ENCODE measurements at regions of chr7 and their contacts with region 1.

Region 1: DNA sequence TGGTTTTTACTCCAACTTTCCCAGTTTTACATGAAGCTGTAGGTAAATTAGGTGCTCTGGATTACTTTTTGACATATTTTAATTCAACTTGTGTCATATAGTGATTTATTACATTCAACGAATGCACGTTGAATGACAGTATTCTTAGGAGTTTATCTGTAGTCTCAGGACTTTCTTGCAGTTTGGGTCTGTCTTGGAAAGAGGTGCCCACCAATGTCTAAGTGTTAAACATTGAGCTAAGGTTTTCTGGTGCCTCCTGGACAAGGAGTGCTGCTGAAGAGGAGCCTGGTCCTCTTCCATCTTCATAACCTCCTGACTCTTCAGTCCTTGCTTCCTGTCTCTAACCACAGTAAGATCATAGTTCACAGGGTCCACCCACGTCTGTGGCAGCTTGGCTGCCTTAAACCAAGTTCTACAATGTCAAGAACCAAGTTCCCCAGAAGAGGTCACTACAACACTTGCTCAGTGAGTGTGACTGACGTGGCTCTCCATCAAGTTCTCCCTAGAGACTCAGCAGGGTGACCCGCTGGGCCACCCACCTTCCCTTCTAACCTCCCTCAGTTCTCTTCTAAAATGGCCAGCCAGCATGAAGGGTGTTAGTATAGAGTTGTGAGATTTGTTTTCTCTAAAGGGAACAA is 6.1 kb downstream of the NPY start:
- DNase-seq: no peak
- ATAC-seq: peak; percentile 64 to 80 (median 78)
- H3K4me3 ChIP-seq: no peak overlapping the region
- H3K27ac ChIP-seq: no peak overlapping the region
- H3K4me1 ChIP-seq: no peaks in the 10 kb centered on the region
- H3K27me3 ChIP-seq: peaks cover 0 to 12% (median 0%) of the 10 kb centered on the region in 3 donors
- CTCF ChIP-seq: peak; percentile 60

Region 2: GRCh38 chr7:24665564-24666294 is 375.6 kb after region 1 on chr7:
- intact Hi-C with region 1: loop called (anchors 5 to 10 kb)
- DNase-seq: no peak
- ATAC-seq: peak in 3 of 4 donors; percentile 68 to 79 (median 68)
- H3K4me3 ChIP-seq: no peak overlapping the region
- H3K27ac ChIP-seq: no peak overlapping the region
- H3K4me1 ChIP-seq: no peaks in the 10 kb centered on the region
- H3K27me3 ChIP-seq: no peaks in the 10 kb centered on the region
- CTCF ChIP-seq: peak; percentile 70

Region 3: DNA sequence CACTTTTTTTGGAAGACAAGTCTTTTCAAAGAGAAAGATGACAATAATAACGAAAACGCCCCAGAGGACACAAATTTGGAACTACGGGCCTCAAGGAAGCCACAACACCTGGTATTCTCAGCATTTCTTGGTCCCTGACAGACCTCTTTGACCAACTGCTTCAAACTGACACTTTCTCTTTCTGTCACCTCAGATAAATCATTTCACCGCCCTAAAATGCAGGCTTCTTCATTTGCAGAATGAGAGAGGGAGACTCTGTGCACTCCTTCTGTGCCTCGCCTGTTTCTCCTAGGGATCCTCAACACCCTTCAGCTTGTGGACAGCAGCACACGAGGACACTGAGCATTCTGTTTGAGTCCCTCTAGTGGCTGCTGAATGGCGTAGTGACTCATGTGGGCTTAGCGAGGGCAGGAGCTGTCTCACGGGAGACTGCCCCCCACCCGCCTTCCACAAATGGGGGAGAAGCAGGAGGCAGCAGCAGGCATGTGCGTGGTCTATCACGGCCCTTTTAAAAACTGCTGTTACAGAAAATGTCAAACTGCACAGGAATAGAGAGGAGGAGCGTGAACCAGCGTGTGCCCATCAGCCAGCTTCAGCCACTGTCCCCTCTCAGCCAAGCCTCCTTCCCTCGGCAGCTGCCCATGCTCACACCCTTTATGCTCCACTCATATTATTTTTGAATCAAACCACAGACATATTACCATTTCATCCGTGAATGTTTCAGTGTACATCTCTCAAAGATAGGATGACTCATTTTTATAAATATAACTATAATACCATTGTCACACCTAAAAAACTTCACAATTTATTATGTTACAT is 425.7 kb after region 1 on chr7:
- intact Hi-C with region 1: loop called in 1 of 2 experiments (anchors 5 kb)
- DNase-seq: no peak
- ATAC-seq: peak; percentile 68 to 89 (median 84)
- H3K4me3 ChIP-seq: no peak overlapping the region
- H3K27ac ChIP-seq: peak overlapping the region; percentile 63
- H3K4me1 ChIP-seq: peaks cover 11% of the 10 kb centered on the region
- H3K27me3 ChIP-seq: no peaks in the 10 kb centered on the region
- CTCF ChIP-seq: peak; percentile 44

Measured in psoas muscle (tissue), 8 donors.